Activated CD8-positive, alpha-beta memory T cell treated with anti-CD3 and anti-CD28 coated beads, Interleukin-2, amount 10 ng/mL, durations not matched to agents 7 days and 5 days (primary cell): ENCODE measurements at regions of chr6 and their contacts with region 1.

Region 1: GRCh38 chr6:157873735-157874344 is 50.8 kb downstream of the SNX9 start:
- DNase-seq: peak; percentile 87
- ATAC-seq: peak; percentile 87
- H3K4me3 Mint-ChIP-seq: no peak overlapping the region
- H3K27ac Mint-ChIP-seq: no peak overlapping the region
- H3K4me1 Mint-ChIP-seq: peaks cover 10% of the 10 kb centered on the region
- H3K27me3 Mint-ChIP-seq: no peaks in the 10 kb centered on the region

Region 2: DNA sequence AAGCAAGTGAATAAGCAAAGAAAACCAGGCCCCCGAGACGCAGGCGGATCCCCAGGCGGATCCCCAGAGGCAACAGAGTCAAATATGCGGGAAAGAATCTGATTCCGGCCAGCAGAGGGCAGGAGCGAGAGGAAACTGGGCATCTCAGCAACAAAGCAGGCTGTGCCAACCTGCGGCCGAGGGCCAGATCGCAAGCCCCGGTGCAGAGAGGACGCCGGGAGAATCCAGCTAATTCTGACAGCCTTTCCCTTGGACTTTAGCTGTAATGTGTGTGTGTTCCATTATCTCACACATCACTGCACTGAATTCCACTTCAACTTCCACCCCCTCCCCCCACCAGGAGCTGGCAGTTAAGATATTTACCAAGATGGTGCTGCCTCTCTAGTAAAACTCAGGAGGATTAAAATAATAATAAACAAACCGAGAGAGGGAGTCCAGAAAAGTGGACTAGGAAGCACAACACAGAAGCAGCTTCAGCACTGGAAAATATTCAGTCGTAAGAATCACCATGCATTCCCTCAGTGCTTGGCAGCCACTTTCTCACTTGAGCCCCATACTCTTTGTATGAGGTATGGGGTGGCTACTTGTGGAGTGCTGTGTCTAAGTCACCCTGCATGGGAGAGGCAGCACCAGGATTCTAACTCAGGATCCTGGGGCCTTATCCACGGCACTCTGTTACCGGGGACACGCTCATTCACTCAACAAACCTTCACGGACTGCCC is 117.0 kb before region 1 on chr6:
- CTCF ChIA-PET with region 1: interaction called, 82 read pairs
- DNase-seq: peak; percentile 85
- ATAC-seq: peak; percentile 44
- H3K4me3 Mint-ChIP-seq: no peak overlapping the region
- H3K27ac Mint-ChIP-seq: no peak overlapping the region
- H3K4me1 Mint-ChIP-seq: peaks cover 47% of the 10 kb centered on the region
- H3K27me3 Mint-ChIP-seq: peaks cover 52% of the 10 kb centered on the region

Region 3: GRCh38 chr6:157764178-157765033 is 109.4 kb before region 1 on chr6:
- CTCF ChIA-PET with region 1: interaction called, 36 read pairs
- DNase-seq: peak; percentile 86
- ATAC-seq: peak; percentile 65
- H3K4me3 Mint-ChIP-seq: peak overlapping the region; percentile 40
- H3K27ac Mint-ChIP-seq: peak overlapping the region; percentile 78
- H3K4me1 Mint-ChIP-seq: peaks cover 60% of the 10 kb centered on the region
- H3K27me3 Mint-ChIP-seq: peaks cover 35% of the 10 kb centered on the region

Region 4: DNA sequence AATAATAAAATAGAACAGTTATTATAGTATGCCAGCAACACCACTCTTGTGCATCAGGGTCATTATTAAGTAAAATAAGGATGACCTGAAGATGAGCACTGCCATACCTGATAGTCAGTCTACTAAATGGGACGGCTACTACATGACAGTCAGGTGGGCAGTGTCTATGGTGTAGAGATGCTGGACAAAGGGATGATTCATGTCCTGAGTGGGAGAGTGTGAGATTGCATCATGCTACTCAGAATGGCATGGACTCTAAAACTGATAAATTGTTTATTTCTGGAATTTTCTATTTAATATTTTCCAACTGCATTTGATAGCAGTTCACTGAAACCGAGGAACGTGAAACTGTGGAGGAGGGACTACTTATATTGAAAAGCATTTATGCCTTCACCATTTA is 12.0 kb before region 1 on chr6:
- CTCF ChIA-PET with region 1: interaction called, 22 read pairs
- DNase-seq: no peak
- ATAC-seq: no peak
- H3K4me3 Mint-ChIP-seq: no peak overlapping the region
- H3K27ac Mint-ChIP-seq: no peak overlapping the region
- H3K4me1 Mint-ChIP-seq: peaks cover 26% of the 10 kb centered on the region
- H3K27me3 Mint-ChIP-seq: peaks cover 28% of the 10 kb centered on the region

Region 5: DNA sequence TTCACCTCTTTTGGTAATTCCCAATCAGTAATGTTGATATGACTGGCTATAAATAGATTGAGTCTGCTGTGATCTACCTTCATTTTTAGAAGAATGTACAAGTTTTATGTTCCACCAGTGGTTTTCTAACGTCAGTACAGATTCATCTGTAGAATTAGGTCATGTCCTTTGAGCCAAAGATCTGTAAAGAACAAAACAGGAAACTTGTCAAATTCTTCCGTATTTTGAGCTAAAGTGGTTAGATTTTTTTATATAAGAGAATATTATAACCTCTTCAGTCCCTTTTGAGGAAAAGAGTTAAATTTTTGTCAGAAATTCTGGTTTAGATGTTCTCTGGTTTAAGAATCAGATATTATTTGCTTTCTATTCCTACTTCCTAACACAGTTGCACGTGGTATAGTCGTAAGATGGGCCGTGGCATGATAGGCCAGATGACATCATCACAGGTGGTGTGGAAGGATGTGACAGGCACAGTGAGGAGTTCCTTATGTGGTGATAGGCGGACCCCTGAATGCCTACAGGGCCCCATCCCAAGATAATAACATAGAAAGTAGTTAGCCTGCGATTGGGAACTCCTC is 11.5 kb after region 1 on chr6:
- CTCF ChIA-PET with region 1: interaction called, 20 read pairs
- DNase-seq: peak; percentile 82
- ATAC-seq: peak; percentile 93
- H3K4me3 Mint-ChIP-seq: no peak overlapping the region
- H3K27ac Mint-ChIP-seq: peak overlapping the region; percentile 68
- H3K4me1 Mint-ChIP-seq: peaks cover 26% of the 10 kb centered on the region
- H3K27me3 Mint-ChIP-seq: no peaks in the 10 kb centered on the region